ENCODE measurements at regions of chr12 and their contacts with region 1.

Region 1: DNA sequence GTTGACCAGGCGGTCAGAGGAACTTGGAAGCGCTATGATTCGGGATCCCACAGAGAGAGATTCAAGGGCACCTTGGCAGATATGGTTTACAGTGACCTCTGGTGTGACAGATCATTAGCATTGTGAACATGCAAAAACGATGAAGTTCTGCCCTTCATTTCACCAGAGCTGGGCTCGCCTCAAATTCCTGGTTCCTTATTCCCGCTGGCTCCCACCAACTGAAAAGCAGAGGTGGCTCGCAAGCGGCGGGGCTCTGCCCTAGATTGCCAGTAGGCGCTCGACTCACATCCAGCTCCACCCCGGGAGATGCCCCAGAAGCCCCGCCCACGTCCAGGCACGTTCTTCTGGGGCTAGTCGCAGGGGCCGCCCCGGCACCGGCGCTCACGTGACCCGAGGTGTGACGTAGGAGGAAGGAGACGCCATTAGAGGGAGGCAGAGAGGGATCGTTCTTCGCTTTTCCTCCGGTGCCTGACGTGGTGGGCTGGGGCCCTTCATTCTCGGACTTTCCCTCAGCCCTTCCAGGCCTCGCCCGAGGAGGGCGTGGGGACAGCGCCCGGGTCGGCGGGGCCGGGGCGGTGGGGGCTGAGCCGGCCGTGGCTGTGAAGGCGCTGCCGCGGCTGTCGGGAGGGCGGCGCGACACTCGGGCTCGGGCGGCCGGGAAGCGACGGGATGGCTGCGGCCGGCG is at the start of gene RAB21:
- DNase-seq: peak; percentile 99
- H3K4me3 ChIP-seq: peak within 1 kb of the TSS; percentile 79 to 85 (median 82)
- H3K27ac ChIP-seq: peak within 1 kb of the TSS; percentile 94 to 97 (median 95)
- H3K4me1 ChIP-seq: peaks cover 0 to 31% (median 26%) of the 10 kb centered on the region in 4 donors
- H3K27me3 ChIP-seq: peaks cover 0 to 5% (median 0%) of the 10 kb centered on the region in 3 donors
- CTCF ChIP-seq: peak in 3 of 4 experiments; percentile 40 to 63 (median 43)
- EP300 ChIP-seq: peak in 1 of 4 donors; percentile 18
- POLR2A ChIP-seq: peak; percentile 84 to 93
- total RNA-seq, gene RAB21: 12.8 to 19.1 (median 15.7) TPM

Region 2: DNA sequence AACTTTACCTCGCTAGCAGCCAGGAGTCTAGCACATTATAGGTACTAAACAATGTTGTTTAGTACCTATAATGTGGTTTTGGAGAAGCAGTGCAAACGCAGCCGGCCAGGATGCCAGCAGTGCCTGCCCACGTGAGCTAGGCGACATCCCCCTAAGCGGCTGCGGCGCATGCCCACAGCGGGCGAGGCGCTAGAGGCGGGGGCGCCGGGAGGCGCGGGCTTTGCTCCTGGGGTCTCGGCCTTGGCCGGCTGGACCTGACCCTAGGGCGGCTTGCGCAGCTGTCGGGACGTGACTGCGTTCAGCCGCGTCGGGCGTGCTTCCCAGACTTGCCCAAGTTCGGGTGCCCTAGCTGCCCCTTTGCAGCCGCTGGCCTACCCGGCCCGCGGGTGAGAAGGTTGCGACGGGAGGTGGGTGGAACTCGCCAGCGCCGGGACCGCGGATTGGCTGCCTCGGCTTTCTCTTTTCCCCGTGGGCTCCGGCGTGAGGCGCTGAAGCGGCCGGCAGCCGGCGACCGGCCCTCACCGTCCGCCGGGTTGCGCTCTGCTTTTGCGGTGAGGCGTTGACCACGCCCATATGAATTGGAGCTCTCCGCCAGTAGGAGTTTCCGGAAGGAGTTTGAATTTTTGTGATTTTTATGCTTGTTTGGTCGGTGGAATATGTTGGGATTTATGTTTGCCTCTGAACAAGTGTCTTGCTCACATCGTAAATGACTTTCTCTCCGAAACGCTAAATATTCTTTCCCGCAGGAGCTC is 68.5 kb before region 1 on chr12 and contains the start of gene TMEM19:
- intact Hi-C with region 1: loop called (anchors 2 kb)
- DNase-seq: peak; percentile 94
- H3K4me3 ChIP-seq: peak within 1 kb of the TSS; percentile 71 to 85 (median 74)
- H3K27ac ChIP-seq: peak within 1 kb of the TSS; percentile 91 to 95 (median 92)
- H3K4me1 ChIP-seq: peaks cover 0 to 34% (median 25%) of the 10 kb centered on the region in 4 donors
- H3K27me3 ChIP-seq: no peaks in the 10 kb centered on the region
- CTCF ChIP-seq: peak in 1 of 4 experiments; percentile 22
- EP300 ChIP-seq: no peak
- POLR2A ChIP-seq: peak; percentile 22 to 48
- total RNA-seq, gene TMEM19: 10.7 to 23.5 (median 12.7) TPM

Region 3: GRCh38 chr12:71702590-71702989 is 52.0 kb before region 1 on chr12:
- intact Hi-C with region 1: no loop called
- DNase-seq: no peak
- H3K4me3 ChIP-seq: no peak overlapping the region
- H3K27ac ChIP-seq: no peak overlapping the region
- H3K4me1 ChIP-seq: no peaks in the 10 kb centered on the region
- H3K27me3 ChIP-seq: no peaks in the 10 kb centered on the region
- CTCF ChIP-seq: no peak
- EP300 ChIP-seq: no peak
- POLR2A ChIP-seq: no peak

Region 4: DNA sequence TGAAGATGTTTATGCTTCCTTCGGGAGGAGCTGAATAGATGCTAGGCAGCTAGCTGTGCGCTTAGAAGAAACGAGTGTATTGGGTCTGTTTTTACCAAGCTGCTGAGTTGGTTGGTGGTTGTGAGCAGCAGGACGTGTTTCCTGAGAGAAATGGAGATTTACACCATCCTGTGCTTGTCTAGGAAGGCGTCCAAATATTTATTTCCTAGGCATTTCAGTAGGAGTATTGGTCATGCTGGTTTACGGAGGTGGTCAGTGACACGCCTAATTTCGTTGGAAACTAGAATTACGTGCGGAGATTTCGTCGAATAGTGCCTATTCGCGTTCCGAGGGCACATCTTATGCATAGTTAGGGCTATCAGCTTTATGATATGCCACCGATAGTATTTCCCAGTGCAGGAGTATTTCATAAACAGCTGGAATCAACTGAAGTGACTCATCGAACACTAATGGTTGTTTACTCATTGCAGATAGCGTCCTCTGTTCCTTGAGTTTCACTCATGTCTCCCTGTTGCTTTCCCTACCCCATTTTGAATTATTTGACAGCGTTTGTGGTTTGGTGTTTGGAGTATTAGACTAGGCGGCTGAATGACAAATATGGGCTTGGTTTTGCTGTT is 85.7 kb after region 1 on chr12:
- intact Hi-C with region 1: loop called (anchors 1 kb)
- DNase-seq: no peak
- H3K4me3 ChIP-seq: peak overlapping the region; percentile 56 to 75 (median 71)
- H3K27ac ChIP-seq: peak overlapping the region; percentile 84 to 96 (median 94)
- H3K4me1 ChIP-seq: peaks cover 0 to 44% (median 34%) of the 10 kb centered on the region in 4 donors
- H3K27me3 ChIP-seq: no peaks in the 10 kb centered on the region
- CTCF ChIP-seq: no peak
- EP300 ChIP-seq: no peak
- POLR2A ChIP-seq: no peak